Activated naive CD4-positive, alpha-beta T cell treated with anti-CD3 and anti-CD28 coated beads for 36 hours (primary cell): ENCODE measurements at regions of chr3 and their contacts with region 1.

Region 1: DNA sequence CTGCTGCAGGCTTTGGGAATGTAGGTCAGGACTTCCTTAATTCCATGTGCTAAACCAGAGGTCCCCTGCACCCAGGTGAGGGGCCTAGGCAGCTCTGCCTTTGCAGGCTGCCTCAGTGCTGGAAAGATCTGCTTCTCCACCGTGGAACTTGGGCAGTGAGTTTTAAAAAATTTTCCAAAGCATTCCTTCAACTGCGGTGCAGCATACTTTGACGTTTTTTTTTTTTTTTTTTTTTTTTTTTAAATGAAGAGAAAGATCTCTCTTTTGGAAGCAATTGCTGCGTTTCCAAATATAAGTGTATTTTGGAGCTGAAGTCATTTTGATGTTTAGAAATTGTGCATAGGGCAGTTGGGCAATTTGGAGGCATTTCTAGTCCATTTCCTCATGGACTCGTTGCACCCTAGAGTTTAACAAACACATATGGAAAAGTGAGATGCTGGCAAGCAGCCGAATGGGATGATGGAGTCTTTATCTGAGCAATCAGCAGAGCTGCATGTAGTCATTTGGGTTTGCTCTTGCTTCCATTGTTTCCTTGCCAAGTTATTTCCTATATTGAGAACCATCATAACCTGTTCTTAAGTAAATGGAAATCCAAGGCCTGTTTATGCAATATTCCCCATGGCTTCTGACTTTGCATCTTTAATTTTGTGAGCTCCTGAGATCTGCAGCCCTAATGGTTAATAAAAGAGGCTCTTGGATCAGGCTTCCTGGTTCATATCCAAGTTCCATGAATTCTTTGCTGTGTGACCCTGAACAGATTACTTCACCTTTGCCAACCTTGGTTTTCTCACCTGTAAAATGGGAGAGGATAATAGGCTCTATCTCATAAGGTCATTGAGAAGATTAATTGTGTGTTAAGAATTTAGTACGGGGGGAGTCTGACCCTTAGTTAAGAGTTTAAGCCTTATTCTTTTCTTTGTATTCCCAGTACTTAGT is 31.2 kb downstream of the ITPR1 start:
- DNase-seq: no peak
- H3K4me3 Mint-ChIP-seq: no peak overlapping the region
- H3K27ac Mint-ChIP-seq: no peak overlapping the region
- H3K4me1 Mint-ChIP-seq: peaks cover 12% of the 10 kb centered on the region
- H3K27me3 Mint-ChIP-seq: no peaks in the 10 kb centered on the region

Region 2: DNA sequence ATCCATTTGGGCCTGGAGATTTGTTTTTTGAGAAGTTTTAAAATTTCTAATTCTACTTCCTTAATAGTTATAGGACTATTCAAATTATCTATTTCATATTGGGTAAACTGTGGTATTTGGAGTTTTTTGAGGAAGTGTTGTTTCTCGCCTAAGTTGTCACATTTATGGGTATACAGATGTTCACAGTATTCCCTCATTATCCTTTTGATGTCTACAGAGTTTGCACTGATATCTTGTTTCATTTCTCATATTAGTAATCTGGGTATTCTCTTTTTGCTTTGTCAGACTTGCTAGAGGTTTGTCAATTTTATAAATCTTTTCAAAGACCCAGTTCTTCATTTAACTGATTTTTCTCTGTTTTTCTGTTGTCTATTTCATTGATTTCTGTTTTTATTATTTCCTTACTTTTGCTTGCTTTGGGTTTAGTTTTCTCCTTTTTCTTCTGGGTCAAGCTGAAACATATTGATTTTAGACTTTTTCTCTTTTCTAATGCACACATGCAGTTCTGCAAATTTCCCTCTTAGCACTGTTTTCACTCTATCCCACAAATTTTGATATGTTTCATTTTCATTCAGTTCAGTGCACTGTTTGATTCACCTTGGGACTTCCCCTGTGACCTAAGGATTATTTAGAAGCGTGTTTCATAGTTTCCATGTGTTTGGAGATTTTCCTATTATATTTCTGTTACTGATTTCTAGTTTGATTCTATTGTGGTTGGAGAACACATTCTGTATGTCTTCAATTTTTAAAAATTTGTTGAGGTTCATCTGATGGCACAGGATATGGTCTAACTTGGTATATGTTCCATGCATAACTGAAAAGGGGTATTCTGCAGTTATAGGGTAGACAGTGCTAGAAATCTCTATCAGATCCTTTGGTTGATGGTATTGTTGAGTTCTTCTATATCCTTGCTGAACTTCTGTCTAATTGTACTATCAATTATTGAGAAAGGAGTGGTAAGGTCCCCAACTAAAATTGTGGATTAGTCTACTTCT is 136.8 kb before region 1 on chr3:
- CTCF ChIA-PET with region 1: no interaction called
- intact Hi-C with region 1: loop called (anchors 1 kb)
- DNase-seq: no peak
- H3K4me3 Mint-ChIP-seq: no peak overlapping the region
- H3K27ac Mint-ChIP-seq: peak overlapping the region; percentile 39
- H3K4me1 Mint-ChIP-seq: peaks cover 26% of the 10 kb centered on the region
- H3K27me3 Mint-ChIP-seq: no peaks in the 10 kb centered on the region

Region 3: DNA sequence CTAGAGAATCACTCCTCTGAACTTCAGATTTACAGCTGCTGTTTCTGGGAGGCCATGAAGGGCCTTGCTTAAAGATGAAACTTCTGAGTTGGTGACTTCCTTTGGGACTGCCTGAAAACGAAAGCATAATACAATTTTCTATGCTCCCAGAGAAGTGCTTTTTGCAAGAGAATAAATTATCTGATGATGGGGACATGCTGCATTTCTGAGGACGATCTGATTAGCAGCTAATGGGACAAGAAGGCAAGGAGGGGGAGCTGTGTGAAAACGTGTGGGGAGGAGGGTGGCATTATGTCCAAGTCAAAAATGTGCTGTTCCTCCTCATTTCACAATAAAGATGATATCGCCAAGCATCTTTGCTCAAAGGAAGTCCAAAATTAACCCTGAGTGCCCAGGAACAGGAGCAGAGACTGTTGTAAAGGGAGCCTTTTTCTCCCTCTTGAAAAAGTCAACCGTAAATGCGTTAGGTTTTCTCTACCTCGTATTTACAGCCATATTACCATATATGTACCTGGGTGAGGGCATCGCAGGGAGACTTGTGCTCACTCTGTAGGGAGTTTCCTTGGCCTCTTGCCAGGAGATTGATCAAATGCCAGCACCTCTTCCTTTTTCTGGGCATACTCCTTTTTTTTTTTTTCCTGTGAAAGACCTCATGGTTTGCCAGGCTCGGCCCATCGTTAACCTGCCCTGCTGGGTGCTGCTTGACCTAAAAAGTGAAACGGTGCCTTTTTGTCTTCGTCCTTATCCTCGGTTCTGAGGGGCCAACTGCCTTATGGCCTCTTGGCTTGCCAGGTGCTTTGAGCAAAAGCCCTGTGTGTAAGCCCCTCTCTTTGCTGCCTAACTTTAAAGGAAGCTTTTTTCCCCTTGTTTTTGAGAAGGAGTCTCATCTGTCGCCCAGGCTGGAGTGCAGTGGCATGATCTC is 19.8 kb before region 1 on chr3:
- CTCF ChIA-PET with region 1: interaction called, 6 read pairs
- intact Hi-C with region 1: loop called (anchors 1 kb)
- DNase-seq: peak; percentile 47
- H3K4me3 Mint-ChIP-seq: peak overlapping the region; percentile 70
- H3K27ac Mint-ChIP-seq: peak overlapping the region; percentile 74
- H3K4me1 Mint-ChIP-seq: peaks cover 45% of the 10 kb centered on the region
- H3K27me3 Mint-ChIP-seq: no peaks in the 10 kb centered on the region

Region 4: GRCh38 chr3:4571690-4572334 is 47.5 kb after region 1 on chr3:
- CTCF ChIA-PET with region 1: interaction called, 14 read pairs
- intact Hi-C with region 1: loop called (anchors 2 kb)
- DNase-seq: no peak
- H3K4me3 Mint-ChIP-seq: no peak overlapping the region
- H3K27ac Mint-ChIP-seq: no peak overlapping the region
- H3K4me1 Mint-ChIP-seq: peaks cover 8% of the 10 kb centered on the region
- H3K27me3 Mint-ChIP-seq: no peaks in the 10 kb centered on the region

Region 5: DNA sequence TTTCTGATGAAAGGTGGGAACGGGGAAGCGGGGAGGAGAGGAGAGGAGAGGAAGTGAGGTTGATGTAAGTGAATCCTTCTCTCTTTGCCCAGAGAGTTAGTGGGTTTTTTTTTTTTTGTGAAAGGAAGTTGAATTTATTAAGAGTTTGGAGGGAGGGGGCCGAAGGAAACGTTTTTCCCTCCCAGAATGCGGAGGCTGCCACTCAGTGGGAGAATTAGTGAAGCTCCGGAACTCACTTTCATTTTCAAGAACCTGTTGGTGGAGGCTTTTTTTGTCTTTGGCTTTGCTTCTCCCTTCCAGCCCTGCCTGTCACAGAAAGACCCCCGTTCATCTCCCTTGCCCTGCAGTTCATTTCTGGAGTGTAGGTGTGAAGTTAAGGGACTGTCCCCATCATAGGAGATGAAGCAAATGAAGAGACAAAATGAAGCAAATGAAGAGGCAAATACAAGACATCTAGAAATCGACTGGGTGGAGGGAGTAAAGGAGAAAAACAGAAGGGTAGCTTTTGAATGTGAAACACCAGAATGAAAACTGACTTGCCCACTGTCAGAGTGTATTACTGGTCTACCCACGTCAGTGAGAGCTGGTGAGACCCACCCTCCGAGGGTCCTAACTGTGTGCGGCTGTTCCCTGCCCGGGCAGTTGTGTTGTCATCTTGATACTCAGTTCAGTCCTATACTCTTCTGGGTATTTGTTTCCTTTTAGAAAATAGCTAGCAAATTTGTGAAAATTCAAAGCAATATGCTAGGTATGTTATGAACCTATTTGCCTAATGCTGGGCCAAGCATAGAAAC is 60.3 kb after region 1 on chr3:
- CTCF ChIA-PET with region 1: interaction called, 10 read pairs
- intact Hi-C with region 1: loop called (anchors 1 kb)
- DNase-seq: peak; percentile 72
- H3K4me3 Mint-ChIP-seq: peak overlapping the region; percentile 70
- H3K27ac Mint-ChIP-seq: peak overlapping the region; percentile 83
- H3K4me1 Mint-ChIP-seq: peaks cover 61% of the 10 kb centered on the region
- H3K27me3 Mint-ChIP-seq: no peaks in the 10 kb centered on the region

Region 6: DNA sequence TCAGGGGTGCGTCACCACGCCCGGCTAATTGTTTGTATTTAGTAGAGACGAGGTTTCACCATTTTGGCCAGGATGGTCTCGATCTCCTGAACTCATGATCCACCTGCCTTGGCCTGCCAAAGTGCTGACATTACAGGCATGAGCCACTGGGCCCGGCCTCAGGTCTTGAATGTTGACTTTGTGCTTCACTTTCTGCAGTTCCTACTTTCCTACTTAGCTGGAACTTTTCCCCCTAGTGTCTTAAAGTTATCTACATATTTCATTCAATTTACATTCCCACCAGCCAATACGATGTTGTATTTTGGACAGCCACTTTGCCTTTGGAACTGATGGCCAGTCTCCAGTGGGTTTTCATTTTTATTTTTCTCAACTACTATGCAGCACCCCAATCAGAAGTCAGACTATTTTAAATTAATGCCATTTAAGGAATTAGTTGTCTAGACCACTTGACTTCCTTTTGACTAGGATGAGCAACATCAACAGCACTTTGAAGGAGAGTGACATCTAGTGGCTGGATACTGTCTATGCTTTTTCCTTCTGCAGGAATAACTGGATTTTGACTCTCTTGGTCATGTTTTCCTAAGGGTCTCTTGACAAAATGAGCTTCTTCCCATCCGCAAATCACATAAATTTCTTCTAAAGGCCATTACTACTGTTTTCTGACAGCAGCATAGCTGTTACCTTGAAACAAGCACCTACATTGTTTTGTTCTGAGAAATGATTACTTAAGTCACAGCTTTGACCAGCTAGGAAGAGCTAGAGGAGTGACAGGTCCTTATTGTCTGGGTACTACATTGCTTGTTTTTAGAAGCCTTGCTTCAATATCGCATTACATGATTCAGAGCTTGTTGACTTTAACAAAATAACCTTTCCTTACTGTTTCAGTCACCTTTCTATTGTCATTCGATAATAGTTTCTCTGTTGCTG is 109.0 kb after region 1 on chr3:
- CTCF ChIA-PET with region 1: interaction called, 38 read pairs
- intact Hi-C with region 1: loop called (anchors 1 kb)
- DNase-seq: no peak
- H3K4me3 Mint-ChIP-seq: no peak overlapping the region
- H3K27ac Mint-ChIP-seq: no peak overlapping the region
- H3K4me1 Mint-ChIP-seq: peaks cover 3% of the 10 kb centered on the region
- H3K27me3 Mint-ChIP-seq: no peaks in the 10 kb centered on the region

Region 7: GRCh38 chr3:5376761-5377160 is 852.4 kb after region 1 on chr3:
- CTCF ChIA-PET with region 1: no interaction called
- intact Hi-C with region 1: no loop called
- DNase-seq: no peak
- H3K4me3 Mint-ChIP-seq: no peak overlapping the region
- H3K27ac Mint-ChIP-seq: no peak overlapping the region
- H3K4me1 Mint-ChIP-seq: no peaks in the 10 kb centered on the region
- H3K27me3 Mint-ChIP-seq: peaks cover 5% of the 10 kb centered on the region